ENCODE measurements at regions of chr9 and their contacts with region 1.

Region 1: DNA sequence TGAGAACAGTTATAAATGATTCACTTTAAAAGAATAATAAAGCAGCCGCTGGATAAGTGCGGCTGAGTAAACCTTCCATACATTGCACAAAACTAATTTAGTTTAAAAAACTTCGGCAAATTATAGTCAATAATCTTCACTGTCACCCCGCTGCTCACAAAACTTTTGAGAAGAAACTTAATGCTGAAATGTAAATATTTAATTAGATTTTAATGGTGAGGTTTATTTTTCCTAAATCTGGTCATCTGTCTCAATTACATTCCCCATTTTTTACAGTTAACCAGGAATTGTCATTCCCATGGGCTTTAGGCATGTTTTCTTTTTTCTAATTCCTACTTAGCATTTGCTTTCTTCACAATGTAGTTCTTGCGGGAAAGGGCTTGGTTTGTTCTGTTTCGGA is 169.8 kb downstream of the CAAP1 start:
- DNase-seq: no peak
- H3K4me3 ChIP-seq: no peak overlapping the region
- H3K27ac ChIP-seq: no peak overlapping the region
- H3K4me1 ChIP-seq: no peaks in the 10 kb centered on the region
- H3K27me3 ChIP-seq: no peaks in the 10 kb centered on the region
- CTCF ChIP-seq: no peak
- POLR2A ChIP-seq: no peak

Region 2: GRCh38 chr9:26548781-26549290 is 173.9 kb before region 1 on chr9:
- intact Hi-C with region 1: no loop called
- DNase-seq: no peak
- H3K4me3 ChIP-seq: no peak overlapping the region
- H3K27ac ChIP-seq: no peak overlapping the region
- H3K4me1 ChIP-seq: peaks cover 10% of the 10 kb centered on the region
- H3K27me3 ChIP-seq: no peaks in the 10 kb centered on the region
- CTCF ChIP-seq: no peak
- POLR2A ChIP-seq: no peak

Region 3: GRCh38 chr9:26685818-26686217 is 36.9 kb before region 1 on chr9:
- intact Hi-C with region 1: loop called (anchors 1 kb)
- DNase-seq: no peak
- H3K4me3 ChIP-seq: no peak overlapping the region
- H3K27ac ChIP-seq: no peak overlapping the region
- H3K4me1 ChIP-seq: no peaks in the 10 kb centered on the region
- H3K27me3 ChIP-seq: no peaks in the 10 kb centered on the region
- CTCF ChIP-seq: no peak
- POLR2A ChIP-seq: no peak

Region 4: DNA sequence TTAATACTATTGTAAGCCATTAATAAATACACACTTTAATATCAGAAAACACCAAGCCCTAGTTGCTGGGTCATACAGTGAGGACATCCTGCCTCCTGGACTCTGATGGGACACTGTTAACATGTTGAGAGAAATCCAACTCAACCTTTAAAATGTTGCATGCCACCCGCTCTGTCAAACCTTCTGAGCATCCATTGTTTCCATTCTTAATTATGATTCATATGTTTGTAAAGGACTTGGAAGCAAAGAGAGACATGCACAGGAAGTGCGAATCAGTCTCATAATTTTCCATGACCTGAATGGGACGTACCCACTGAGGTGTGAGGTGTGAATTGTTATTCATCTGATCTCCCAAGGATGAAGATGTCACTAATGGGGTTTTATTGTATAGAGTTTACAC is 16.5 kb before region 1 on chr9:
- intact Hi-C with region 1: no loop called
- DNase-seq: no peak
- H3K4me3 ChIP-seq: no peak overlapping the region
- H3K27ac ChIP-seq: no peak overlapping the region
- H3K4me1 ChIP-seq: no peaks in the 10 kb centered on the region
- H3K27me3 ChIP-seq: no peaks in the 10 kb centered on the region
- CTCF ChIP-seq: no peak
- POLR2A ChIP-seq: no peak

Measured in vagina (tissue), 2 donors.